ENCODE measurements at regions of chr18 and their contacts with region 1.

Region 1: DNA sequence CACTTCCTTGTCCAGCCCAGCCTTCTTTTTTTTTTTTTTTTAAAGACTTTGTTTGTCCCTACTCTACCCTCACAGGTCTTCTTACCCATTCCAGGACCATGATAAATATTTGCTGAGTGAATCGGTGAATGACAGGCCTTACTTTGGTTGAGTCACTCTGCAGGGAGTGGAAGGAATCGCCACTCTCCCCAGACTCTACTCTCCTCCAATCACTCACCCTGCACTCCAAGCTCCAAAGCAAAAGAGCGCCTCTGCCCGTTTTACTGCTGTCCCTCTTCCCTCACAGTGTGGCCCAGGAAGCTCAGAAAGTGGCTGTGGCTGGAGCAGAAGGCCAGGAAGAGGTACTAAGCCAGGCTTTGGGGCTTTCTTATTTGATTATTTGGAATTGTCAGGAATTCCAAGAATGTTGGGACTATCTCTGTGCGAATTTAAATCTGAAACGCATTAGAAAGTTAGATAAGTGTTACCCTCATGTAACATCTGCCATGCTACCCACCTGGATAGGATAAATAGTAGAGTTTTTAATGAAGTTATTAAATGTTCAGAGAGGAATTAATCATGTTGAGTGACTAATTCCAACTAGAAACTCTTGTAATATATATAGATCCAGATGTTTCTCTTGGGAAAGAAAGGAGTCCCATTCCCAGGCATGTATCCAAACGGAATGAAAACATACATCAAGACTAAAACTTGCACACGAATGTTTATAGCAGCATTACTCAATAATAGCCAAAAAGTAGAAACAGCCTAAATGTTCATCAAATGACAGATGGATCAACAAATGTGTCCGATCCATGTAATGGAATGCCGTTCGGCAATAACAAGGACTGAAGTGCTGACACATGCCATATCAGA is 43.0 kb upstream of the CHMP1B start:
- DNase-seq: no peak
- ATAC-seq: no peak

Region 2: GRCh38 chr18:11752116-11752911 is 55.9 kb before region 1 on chr18:
- intact Hi-C with region 1: loop called (anchors 10 kb)
- DNase-seq: no peak
- ATAC-seq: no peak

Region 3: GRCh38 chr18:11851146-11851805 is 43.0 kb after region 1 on chr18 and contains the start of gene CHMP1B:
- intact Hi-C with region 1: loop called (anchors 5 kb)
- DNase-seq: peak; percentile 100
- ATAC-seq: peak; percentile 98
- total RNA-seq, gene CHMP1B: 28.6 TPM

Measured in Right ventricle myocardium inferior (tissue), 1 donor.